Testis (tissue), 5 donors: ENCODE measurements at regions of chr9 and their contacts with region 1.

Region 1: DNA sequence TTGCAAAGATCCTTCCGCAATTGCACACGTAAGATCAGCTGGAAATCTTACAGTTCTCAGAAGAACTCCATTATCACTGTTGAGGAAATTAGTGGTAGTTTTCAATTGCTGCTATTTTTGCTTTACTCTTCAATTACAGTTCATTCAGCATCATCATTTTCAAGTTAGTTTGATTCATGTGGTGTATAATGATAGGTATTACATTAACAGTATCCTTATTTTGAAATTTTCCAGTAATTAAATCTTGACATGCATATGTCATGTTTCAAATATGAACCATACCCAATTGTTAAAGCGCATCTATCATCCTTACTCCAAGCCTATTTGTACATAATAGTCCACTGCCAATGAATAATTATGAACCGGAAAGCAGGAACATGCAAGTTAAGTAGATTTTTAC is 60.3 kb downstream of the NR6A1 start:
- DNase-seq: no peak
- H3K4me3 ChIP-seq: no peak overlapping the region
- H3K27ac ChIP-seq: no peak overlapping the region
- H3K4me1 ChIP-seq: no peaks in the 10 kb centered on the region
- H3K27me3 ChIP-seq: no peaks in the 10 kb centered on the region
- CTCF ChIP-seq: no peak
- POLR2A ChIP-seq: no peak

Region 2: DNA sequence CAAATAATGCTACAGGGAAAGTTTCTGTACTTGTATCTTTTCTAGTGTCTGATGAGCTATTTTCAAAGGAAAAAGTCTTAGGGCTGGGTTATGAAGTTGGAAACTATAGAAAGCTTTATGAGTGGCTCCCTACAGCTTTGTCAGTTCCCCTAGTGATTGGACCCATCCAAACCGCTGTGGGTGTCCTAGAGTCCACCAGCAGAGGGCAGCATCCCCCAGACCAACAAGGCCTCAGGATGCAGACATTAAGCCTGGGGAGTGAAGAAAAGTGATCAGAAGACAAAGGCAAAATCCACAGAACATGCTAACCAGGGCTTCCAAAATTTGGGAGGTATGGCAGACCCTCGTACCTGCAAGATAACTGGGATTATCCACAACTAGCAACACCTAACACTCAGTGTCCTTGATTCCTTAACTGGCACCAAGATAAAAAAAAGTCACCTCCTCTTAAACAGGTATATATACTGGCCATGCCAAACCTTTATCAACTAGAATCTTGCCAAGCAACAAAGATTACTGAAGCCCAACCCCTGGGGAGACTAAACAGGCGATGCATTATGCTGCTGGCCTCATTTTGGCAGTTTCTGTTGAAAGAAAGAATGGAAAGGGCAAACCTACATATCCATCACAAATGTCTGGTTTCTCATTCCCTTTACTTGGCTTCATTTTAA is 93.2 kb before region 1 on chr9:
- intact Hi-C with region 1: loop called (anchors 5 kb)
- DNase-seq: peak; percentile 84
- H3K4me3 ChIP-seq: no peak overlapping the region
- H3K27ac ChIP-seq: no peak overlapping the region
- H3K4me1 ChIP-seq: no peaks in the 10 kb centered on the region
- H3K27me3 ChIP-seq: no peaks in the 10 kb centered on the region
- CTCF ChIP-seq: peak; percentile 63 to 78 (median 78)
- POLR2A ChIP-seq: no peak

Region 3: GRCh38 chr9:124639637-124640036 is 71.1 kb before region 1 on chr9:
- intact Hi-C with region 1: no loop called
- DNase-seq: no peak
- H3K4me3 ChIP-seq: no peak overlapping the region
- H3K27ac ChIP-seq: no peak overlapping the region
- H3K4me1 ChIP-seq: no peaks in the 10 kb centered on the region
- H3K27me3 ChIP-seq: no peaks in the 10 kb centered on the region
- CTCF ChIP-seq: no peak
- POLR2A ChIP-seq: no peak

Region 4: GRCh38 chr9:124665391-124666058 is 45.2 kb before region 1 on chr9:
- intact Hi-C with region 1: no loop called
- DNase-seq: no peak
- H3K4me3 ChIP-seq: no peak overlapping the region
- H3K27ac ChIP-seq: peak overlapping the region in 1 of 2 donors; percentile 25
- H3K4me1 ChIP-seq: peaks cover 6% of the 10 kb centered on the region
- H3K27me3 ChIP-seq: no peaks in the 10 kb centered on the region
- CTCF ChIP-seq: no peak
- POLR2A ChIP-seq: no peak

Region 5: DNA sequence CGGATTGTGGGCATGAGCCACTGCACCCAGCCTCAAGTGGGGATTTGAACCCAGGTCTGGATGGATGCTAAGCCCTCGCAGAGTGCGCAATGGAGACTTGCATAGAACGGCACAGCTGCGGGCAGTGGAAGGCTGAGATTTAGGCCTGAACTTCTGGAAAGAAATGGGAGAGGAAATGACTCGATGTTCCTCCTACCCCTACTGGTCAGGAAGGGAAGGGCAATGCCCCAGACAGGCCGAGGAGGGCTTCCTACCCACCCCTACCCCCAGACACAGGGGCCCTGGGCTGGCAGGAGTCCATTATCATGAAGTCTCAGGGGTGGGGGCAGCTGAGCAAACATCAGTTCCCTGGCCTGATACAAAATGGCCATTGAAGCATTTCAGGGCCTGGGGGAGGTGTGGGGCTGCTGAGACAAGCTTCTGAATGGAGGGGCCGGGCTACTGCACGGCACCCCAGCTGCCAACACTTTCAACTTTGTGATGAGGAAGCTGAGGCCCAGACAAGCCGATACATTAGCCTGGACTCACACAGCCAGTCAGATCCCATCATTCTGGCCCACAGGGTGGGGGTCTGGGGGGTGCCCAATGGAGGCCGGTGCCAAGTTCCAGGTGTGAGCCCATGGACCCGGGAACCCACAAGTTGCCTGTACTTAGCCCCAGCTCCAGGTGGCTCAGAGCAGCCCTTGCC is 129.0 kb after region 1 on chr9:
- intact Hi-C with region 1: no loop called
- DNase-seq: no peak
- H3K4me3 ChIP-seq: no peak overlapping the region
- H3K27ac ChIP-seq: no peak overlapping the region
- H3K4me1 ChIP-seq: peaks cover 20% of the 10 kb centered on the region
- H3K27me3 ChIP-seq: no peaks in the 10 kb centered on the region
- CTCF ChIP-seq: peak; percentile 12 to 44 (median 23)
- POLR2A ChIP-seq: no peak